IMR-90 (cell line): ENCODE measurements at regions of chr21 and their contacts with region 1.

Region 1: DNA sequence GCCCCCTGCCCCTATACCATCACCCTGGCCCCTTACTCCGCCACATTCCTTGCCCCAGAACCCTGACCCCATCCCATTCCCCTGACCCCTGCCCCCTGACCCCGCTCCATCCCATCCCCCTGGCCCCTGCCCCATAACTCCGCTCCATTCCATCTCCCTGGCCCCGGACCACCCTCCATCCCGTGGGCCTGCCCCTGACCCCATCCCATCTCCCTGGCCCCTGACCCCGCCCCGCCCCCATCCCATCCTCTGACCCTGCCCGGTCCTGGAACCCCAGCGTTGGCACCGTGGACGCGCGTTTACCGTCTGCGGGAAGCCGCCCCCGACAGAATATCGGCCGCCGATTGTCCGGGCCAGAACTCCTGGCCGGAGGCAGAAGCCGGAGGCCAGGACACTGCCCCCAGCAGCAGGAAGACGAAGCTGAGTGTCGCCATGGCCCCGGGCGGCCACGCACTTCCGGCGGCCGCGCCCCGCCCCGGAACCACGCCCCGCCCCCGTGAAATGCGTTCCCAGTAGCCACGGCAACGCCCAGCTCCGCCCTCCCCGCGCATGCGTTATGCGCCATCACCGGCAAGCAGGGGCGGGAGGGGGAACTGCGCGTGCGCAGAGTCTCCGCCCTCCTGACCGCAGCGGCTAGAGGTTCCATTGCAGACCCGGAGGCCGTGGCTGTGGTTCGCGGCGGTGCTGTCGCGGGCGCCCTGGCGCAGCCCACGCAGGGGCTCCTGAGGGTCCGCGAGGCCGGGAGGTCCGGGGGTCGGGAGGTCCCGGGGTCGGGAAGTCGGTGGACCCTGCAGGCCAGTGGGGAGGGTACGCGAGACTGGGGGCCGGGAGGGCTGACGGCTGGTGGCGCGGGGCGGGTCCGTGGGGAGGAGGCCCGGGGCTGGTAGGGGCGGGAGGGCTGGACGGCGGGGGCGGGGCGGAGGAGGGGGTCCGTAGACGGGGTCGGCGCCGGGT is at the start of gene POFUT2:
- DNase-seq: peak; percentile 92
- ATAC-seq: peak; percentile 75
- H3K4me3 ChIP-seq: peak within 1 kb of the TSS; percentile 93
- H3K27ac ChIP-seq: peak within 1 kb of the TSS; percentile 97
- H3K4me1 ChIP-seq: peaks cover 11% of the 10 kb centered on the region
- H3K27me3 ChIP-seq: no peaks in the 10 kb centered on the region
- CTCF ChIP-seq: 0 out of 2 replicates have a peak, but pooled peaks have one; percentile 15
- POLR2A ChIP-seq: peak; percentile 96
- RAD21 ChIP-seq: no peak
- total RNA-seq, gene POFUT2: 18.8 and 23.9 TPM in 2 replicates

Region 2: DNA sequence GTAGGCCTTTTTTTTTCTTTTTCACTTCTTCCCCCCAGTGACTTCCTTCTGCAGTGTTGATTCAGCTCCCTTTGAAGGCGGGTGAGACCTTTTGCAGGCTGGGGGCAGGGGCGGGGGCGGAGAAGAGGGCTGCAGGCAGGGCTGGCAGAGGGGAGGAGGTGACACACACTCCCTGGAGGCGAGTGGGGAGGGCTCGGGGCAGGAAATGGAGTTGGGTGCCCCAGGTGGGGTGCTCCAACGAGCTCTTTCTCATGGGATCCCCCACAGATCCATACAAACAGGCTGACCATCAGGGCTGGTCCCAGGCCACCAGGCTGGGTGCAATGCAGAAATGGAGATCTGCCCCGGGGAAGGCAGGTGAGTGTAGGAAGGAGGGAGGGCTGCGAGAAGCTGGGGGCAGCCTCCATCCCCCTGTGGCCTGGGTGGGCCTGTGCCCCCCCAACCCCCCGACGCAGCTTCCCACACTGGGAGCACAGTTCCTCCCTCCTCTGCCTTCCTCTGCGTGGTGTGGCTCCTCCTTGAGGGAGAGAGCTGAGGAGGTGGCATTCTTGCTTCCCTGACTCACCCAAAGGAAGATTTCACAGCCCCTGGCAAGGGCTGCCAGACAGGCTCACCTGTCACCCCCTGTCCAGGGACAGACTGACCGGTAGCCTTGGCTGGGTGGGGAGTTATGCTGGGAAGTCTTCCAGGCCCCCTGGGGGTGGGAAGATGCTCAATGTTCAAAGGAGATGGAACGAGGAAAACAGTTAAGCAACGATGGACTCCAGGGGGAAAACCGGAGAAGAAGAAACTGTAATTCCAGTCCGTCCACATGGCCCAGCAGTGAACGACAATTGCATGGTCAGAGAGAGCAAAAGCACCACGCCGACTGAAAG is 359.9 kb before region 1 on chr21:
- CTCF ChIA-PET with region 1: no interaction called
- POLR2A ChIA-PET with region 1: no interaction called
- dilution Hi-C with region 1: no loop called
- in situ Hi-C with region 1: no loop called
- intact Hi-C with region 1: no loop called
- DNase-seq: peak; percentile 56
- ATAC-seq: peak; percentile 44
- H3K4me3 ChIP-seq: no peak overlapping the region
- H3K27ac ChIP-seq: no peak overlapping the region; the same call in 1 of the 2 replicates
- H3K4me1 ChIP-seq: peaks cover 28% of the 10 kb centered on the region
- H3K27me3 ChIP-seq: peaks cover 62% of the 10 kb centered on the region
- CTCF ChIP-seq: no peak
- POLR2A ChIP-seq: no peak
- RAD21 ChIP-seq: no peak

Region 3: GRCh38 chr21:45386721-45387371 is 99.1 kb after region 1 on chr21:
- CTCF ChIA-PET with region 1: no interaction called
- POLR2A ChIA-PET with region 1: no interaction called
- dilution Hi-C with region 1: no loop called
- in situ Hi-C with region 1: no loop called
- intact Hi-C with region 1: loop called (anchors 5 kb)
- DNase-seq: peak; percentile 97
- ATAC-seq: peak; percentile 95
- H3K4me3 ChIP-seq: no peak overlapping the region
- H3K27ac ChIP-seq: peak overlapping the region; percentile 57
- H3K4me1 ChIP-seq: peaks cover 18% of the 10 kb centered on the region
- H3K27me3 ChIP-seq: no peaks in the 10 kb centered on the region
- CTCF ChIP-seq: peak; percentile 47
- POLR2A ChIP-seq: peak; percentile 64
- RAD21 ChIP-seq: peak; percentile 47; the same call in 1 of the 2 replicates

Region 4: DNA sequence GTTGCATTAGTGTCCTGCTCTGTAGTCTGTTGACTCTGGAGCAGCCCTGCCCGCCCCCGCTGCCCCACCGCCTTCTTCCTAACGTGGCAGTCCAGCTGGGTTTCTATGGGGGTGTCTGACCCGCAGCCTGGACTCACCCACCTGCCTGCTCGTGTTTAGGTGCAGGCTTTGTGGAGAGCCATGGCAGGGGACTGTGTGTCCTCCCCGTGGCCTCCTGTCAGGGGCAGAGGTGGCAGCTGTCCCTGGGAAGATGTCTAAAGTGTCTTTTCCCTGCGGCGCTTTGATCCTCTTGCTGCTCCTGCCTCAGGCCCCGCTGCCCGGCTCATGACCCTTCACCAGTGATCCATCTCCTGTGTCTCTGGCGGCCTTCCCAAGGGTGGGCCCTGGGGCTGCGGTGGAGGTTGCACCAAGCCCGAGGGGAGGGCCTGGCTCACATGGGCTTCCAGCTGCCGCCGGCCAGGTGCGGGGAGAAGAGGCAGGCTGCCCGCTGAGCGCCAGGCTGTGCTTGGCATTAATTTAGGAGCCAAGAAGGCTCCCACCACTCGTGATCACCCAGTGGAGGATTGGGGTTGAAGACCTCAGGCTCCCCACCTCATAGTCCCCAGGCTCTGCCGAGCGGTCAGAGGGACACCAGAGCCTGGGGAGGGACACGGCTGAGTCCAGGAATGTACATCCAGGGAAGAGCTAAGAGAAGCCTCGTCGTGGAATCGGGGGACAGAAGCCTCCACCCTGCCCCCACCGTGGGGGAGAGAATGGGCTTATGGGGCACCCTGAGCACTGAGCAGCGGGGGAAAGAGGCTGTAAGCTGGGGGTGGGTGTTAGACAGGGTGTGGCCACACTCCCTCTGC is 161.3 kb after region 1 on chr21:
- CTCF ChIA-PET with region 1: no interaction called
- POLR2A ChIA-PET with region 1: no interaction called
- dilution Hi-C with region 1: no loop called
- in situ Hi-C with region 1: loop called (anchors 5 kb)
- intact Hi-C with region 1: no loop called
- DNase-seq: no peak
- ATAC-seq: no peak
- H3K4me3 ChIP-seq: no peak overlapping the region
- H3K27ac ChIP-seq: no peak overlapping the region
- H3K4me1 ChIP-seq: peaks cover 12% of the 10 kb centered on the region
- H3K27me3 ChIP-seq: no peaks in the 10 kb centered on the region
- CTCF ChIP-seq: no peak
- POLR2A ChIP-seq: no peak
- RAD21 ChIP-seq: no peak

Region 5: DNA sequence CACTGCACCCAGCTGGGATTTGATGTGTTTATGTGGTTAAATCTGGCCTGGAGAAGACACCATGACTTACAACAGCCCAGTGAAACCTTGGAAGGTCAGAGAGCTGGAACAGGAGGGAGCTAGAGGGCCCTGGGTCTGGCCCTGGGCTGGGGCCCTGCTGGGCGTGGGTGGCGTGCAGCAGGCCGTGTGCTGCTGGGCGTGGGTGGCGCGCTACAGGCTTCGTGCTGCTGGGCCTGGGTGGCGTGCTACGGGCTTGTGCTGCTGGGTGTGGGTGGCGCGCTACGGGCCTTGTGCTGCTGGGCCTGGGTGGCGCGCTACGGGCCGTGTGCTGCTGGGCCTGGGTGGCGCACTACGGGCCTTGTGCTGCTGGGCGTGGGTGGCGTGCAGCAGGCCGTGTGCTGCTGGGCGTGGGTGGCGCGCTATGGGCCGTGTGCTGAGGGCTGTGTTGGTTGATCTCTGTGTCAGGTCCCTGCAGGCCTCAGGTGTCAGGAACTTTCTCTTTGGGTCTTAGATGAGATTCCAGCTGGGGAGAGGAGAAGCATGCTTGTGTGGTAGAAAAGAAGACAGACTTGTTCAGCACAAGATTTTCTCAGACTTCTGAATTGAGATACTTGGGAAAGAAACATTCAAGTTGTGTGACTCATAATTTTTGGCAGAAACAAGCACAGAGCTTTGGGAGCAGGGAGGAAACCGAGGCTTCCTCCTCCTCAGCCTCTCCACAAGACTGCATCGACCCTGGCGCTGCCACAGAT is 183.2 kb after region 1 on chr21:
- CTCF ChIA-PET with region 1: no interaction called
- POLR2A ChIA-PET with region 1: no interaction called
- dilution Hi-C with region 1: no loop called
- in situ Hi-C with region 1: no loop called
- intact Hi-C with region 1: no loop called
- DNase-seq: peak; percentile 93
- ATAC-seq: peak; percentile 71
- H3K4me3 ChIP-seq: no peak overlapping the region
- H3K27ac ChIP-seq: peak overlapping the region; percentile 73
- H3K4me1 ChIP-seq: peaks cover 32% of the 10 kb centered on the region
- H3K27me3 ChIP-seq: no peaks in the 10 kb centered on the region
- CTCF ChIP-seq: no peak
- POLR2A ChIP-seq: no peak
- RAD21 ChIP-seq: no peak

Region 6: DNA sequence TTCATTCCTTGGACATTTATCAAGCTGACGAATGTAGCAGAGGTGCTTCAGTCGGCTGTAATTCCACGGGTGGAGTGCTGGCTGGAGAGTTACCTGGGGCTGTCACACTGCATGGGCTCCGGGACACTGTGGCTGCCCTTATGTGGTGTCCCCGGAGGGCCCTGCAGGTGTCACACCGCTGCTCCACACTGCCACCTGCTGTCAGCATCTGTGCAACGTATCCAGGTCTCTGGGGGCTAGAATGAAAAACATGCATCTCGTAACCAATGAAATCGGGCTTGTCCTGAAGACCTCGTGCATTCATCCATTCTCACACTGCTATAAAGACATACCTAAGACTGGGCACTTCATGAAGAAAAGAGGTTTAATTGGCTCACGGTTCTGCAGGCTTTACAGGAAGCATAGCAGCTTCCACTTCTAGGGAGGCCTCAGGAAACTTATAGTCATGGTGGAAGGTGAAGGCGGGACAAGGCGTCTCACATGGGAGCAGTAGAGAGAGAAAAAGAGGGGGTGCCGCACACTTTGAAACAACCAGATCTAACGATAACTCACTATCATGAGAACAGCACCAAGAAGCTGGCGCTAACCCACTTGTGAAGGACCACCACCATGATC is 309.1 kb after region 1 on chr21:
- CTCF ChIA-PET with region 1: no interaction called
- POLR2A ChIA-PET with region 1: no interaction called
- dilution Hi-C with region 1: no loop called
- in situ Hi-C with region 1: no loop called
- intact Hi-C with region 1: loop called (anchors 5 kb)
- DNase-seq: peak; percentile 28
- ATAC-seq: peak; percentile 90
- H3K4me3 ChIP-seq: no peak overlapping the region
- H3K27ac ChIP-seq: no peak overlapping the region
- H3K4me1 ChIP-seq: no peaks in the 10 kb centered on the region
- H3K27me3 ChIP-seq: peaks cover 51% of the 10 kb centered on the region
- CTCF ChIP-seq: peak; percentile 82
- POLR2A ChIP-seq: no peak
- RAD21 ChIP-seq: peak; percentile 70